Mammary epithelial cell (primary cell): ENCODE measurements at regions of chr6 and their contacts with region 1.

Region 1: GRCh38 chr6:28136585-28137504 is 4.8 kb upstream of the ZKSCAN8 start:
- DNase-seq: peak; percentile 89
- H3K4me3 ChIP-seq: peak overlapping the region; percentile 63 to 90 (median 90)
- H3K27ac ChIP-seq: peak overlapping the region; percentile 63
- H3K4me1 ChIP-seq: peaks cover 20% of the 10 kb centered on the region
- H3K27me3 ChIP-seq: no peaks in the 10 kb centered on the region
- CTCF ChIP-seq: no peak

Region 2: GRCh38 chr6:27902335-27903314 is 234.2 kb before region 1 on chr6:
- CTCF ChIA-PET with region 1: no interaction called
- dilution Hi-C with region 1: no loop called
- in situ Hi-C with region 1: no loop called
- intact Hi-C with region 1: loop called (anchors 2 kb)
- DNase-seq: peak; percentile 80
- H3K4me3 ChIP-seq: peak overlapping the region; percentile 55 to 84 (median 68)
- H3K27ac ChIP-seq: peak overlapping the region; percentile 60
- H3K4me1 ChIP-seq: peaks cover 10% of the 10 kb centered on the region
- H3K27me3 ChIP-seq: no peaks in the 10 kb centered on the region
- CTCF ChIP-seq: no peak

Region 3: GRCh38 chr6:28124102-28124970 is 12.5 kb before region 1 on chr6 and contains the start of gene ZSCAN16:
- CTCF ChIA-PET with region 1: no interaction called
- dilution Hi-C with region 1: no loop called
- in situ Hi-C with region 1: no loop called
- intact Hi-C with region 1: loop called (anchors 1 kb)
- DNase-seq: peak; percentile 85
- H3K4me3 ChIP-seq: peak within 1 kb of the TSS; percentile 66 to 81 (median 73)
- H3K27ac ChIP-seq: peak within 1 kb of the TSS; percentile 27
- H3K4me1 ChIP-seq: peaks cover 7% of the 10 kb centered on the region
- H3K27me3 ChIP-seq: no peaks in the 10 kb centered on the region
- CTCF ChIP-seq: no peak
- total RNA-seq, gene ZSCAN16: 1.1 to 1.7 TPM

Region 4: DNA sequence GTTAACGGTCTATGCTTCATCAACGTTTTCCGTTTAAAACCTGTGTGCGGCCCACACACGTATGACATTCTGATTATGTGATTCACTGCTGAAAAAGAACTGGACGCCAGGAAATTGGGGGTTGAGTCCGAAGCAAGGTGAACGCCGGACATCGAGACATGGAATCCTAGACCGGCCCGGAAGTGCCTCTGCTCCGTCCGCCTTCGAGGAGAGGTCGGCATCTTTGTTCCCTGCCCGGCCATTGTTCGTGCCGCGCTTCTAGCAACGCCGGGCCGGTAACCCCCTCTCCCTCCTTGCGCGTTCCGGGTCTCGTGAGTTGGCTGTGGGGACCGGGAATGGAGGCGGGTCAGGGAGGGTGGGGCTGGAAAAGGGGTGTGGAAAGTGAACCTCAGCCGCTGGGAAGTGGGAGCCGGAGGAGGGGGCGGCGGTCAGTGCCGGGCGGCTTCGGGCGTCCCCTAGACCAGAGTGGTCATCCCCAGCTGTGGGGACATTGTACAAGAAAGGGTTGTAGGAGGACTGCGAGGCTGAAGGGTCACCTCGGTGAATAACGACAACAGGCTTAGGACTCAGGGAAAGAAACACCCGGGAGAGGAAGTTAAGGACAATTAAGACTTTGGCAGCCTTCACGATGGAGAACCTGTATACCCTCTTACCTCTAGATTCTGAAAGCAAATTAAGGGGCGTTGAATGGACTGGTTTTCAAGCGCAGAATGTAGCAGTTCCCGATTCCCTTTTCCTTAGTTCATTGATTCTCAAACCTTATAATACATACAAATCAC is 88.4 kb after region 1 on chr6 and contains the start of gene ZSCAN9:
- CTCF ChIA-PET with region 1: no interaction called
- dilution Hi-C with region 1: no loop called
- in situ Hi-C with region 1: no loop called
- intact Hi-C with region 1: loop called (anchors 1 kb)
- DNase-seq: peak; percentile 91
- H3K4me3 ChIP-seq: peak within 1 kb of the TSS; percentile 57 to 76 (median 66)
- H3K27ac ChIP-seq: peak within 1 kb of the TSS; percentile 62
- H3K4me1 ChIP-seq: peaks cover 9% of the 10 kb centered on the region
- H3K27me3 ChIP-seq: no peaks in the 10 kb centered on the region
- CTCF ChIP-seq: no peak
- total RNA-seq, gene ZSCAN9: 11.9 to 15.5 TPM

Region 5: DNA sequence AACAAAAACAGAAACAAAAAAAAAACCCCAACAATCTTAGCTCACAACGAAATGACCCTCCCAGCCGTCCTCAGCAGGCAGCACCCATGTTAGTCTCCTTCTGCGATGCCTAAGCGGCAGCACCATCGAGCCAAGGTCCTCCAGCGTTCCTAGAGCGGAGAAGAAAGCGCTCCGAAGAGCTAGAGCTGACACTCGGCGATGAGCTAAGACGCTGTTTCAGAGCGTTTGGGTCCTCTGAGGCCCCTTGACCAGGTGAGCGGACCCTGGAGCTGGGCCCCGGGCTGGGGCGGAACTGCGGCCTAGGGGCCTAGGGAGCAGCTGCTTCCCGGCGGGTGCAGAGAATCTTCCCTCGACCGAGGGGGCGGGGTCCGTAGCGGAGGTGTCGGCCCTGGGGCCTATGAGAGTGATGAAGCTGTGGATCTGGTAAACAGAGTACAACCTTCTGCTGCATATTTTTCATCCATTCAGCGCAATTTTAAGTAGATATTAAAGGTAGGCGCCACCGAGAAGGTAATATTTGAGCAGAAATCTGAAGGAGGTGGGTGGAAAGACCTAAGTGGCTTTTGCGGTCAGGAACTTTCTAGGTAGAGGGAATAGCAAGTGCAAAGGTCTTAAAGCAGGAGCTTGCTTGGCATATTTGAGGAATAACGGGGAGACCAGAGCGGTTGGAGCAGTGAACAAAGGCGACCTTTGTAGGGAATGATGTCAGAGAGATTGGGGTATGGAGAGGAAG is 130.3 kb after region 1 on chr6 and contains the start of gene ZSCAN26:
- CTCF ChIA-PET with region 1: no interaction called
- dilution Hi-C with region 1: no loop called
- in situ Hi-C with region 1: no loop called
- intact Hi-C with region 1: loop called (anchors 5 kb)
- DNase-seq: peak; percentile 91
- H3K4me3 ChIP-seq: peak within 1 kb of the TSS; percentile 85 to 94 (median 91)
- H3K27ac ChIP-seq: peak within 1 kb of the TSS; percentile 70
- H3K4me1 ChIP-seq: peaks cover 22% of the 10 kb centered on the region
- H3K27me3 ChIP-seq: no peaks in the 10 kb centered on the region
- CTCF ChIP-seq: no peak
- total RNA-seq, gene ZSCAN26: 12.4 to 12.7 TPM

Region 6: DNA sequence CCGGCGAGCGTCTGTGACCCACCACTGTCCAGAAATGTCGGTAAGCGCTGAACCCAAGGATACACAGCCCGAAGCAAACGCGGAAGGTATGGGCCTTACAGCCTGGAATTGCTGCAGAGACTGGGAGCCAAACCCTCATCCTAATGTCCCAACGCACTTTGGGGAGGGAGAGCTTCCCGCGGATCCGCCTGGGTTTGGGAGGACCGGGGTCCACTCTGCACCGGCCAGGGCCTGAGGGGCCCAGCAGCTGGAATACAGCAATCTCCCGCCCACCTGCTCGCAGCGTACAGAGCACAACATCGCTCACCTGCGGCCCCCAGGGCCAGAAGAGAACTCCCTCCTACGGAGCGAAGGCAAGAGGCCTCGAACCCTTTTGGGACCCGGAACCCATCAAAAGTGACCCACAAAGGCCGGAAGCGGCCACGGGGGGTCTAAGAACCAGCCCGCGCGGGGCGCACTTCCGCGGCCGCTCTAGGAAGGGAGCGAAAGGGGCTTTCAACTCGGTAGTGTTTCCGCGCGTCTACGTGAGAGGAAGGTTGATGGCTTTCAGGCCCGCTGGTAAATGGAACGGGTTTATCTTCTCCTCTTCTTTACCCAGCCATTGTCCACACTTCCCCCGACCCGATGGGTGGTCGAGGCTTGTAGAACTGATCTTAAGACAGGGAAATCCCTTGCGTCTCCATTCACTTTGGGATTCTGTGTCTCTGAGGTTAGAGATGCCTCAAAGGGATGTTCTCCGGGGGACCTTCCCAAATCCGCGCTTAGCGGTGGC is 262.7 kb after region 1 on chr6 and contains the start of gene ZSCAN12:
- CTCF ChIA-PET with region 1: no interaction called
- dilution Hi-C with region 1: no loop called
- in situ Hi-C with region 1: no loop called
- intact Hi-C with region 1: loop called (anchors 1 kb)
- DNase-seq: peak; percentile 79
- H3K4me3 ChIP-seq: peak within 1 kb of the TSS; percentile 76 to 91 (median 78)
- H3K27ac ChIP-seq: peak within 1 kb of the TSS; percentile 84
- H3K4me1 ChIP-seq: peaks cover 27% of the 10 kb centered on the region
- H3K27me3 ChIP-seq: no peaks in the 10 kb centered on the region
- CTCF ChIP-seq: peak; percentile 43 to 75
- total RNA-seq, gene ZSCAN12: 5.3 to 8.5 TPM